Activated T-helper 1 cell treated with anti-CD3 and anti-CD28 coated beads, Interleukin-12 subunit alpha, Interleukin-12 subunit beta, Interleukin-2, Interleukin-4 antibody, amounts not matched to agents 30 ng/mL and 10 ng/mL and 1 ng/mL, durations not matched to agents 14 hours and 24 hours and 36 hours (primary cell): ENCODE measurements at regions of chr7 and their contacts with region 1.

Region 1: DNA sequence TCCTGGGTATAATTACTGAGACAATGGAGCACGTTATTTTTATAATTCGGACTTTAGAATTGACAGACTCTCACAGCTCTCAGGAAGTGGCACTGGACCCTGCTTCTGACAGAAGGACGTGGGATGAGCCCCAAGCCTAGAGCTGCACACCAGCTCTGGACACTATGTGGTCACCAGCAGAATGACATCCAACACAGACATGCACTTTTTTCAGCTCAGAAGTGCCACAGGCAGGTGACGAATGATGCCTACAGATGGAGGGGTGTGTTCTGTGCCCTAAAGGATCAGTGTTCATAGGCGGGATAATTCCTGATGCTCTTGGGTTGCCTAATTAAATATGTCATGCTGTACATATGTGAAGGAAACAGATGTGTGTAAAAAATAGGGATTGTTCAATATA is 87.9 kb downstream of the VIPR2 start:
- DNase-seq: no peak
- H3K4me3 Mint-ChIP-seq: no peak overlapping the region
- H3K27ac Mint-ChIP-seq: no peak overlapping the region
- H3K4me1 Mint-ChIP-seq: peaks cover 9% of the 10 kb centered on the region
- H3K27me3 Mint-ChIP-seq: no peaks in the 10 kb centered on the region

Region 2: DNA sequence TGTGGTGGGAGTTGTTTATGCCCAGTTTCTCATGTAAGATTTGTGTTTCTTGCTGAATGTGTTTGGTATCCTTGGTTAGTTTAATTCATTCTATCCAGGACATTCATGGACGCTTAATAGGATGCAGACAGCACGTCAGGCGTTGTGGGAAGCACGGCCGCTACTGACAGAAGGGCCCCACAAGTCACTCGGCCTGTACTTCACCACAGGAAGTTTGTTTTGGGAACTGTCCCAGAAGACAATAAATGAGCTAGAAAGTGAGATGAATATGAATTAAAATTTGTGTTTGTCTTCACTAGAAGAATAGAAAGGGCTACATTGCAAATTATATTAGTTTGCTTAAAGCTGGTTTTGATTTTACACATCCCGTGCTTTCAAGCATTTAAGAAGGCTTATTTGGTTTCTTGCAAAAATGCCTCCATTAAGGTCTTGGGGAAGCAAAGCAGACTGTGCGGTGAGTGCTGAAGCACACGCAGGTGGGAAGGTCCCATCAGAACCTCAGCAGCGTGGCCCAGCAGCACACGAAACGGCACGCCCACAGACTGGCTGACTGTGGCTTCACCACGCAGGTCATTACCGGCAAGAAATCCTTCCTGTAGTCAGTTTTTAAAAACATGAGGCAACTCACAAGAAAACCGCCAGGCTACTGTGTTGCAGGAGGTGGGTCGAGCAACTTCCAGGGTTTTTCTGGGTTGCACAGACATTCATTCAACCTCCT is 13.9 kb after region 1 on chr7:
- intact Hi-C with region 1: loop called (anchors 2 kb)
- DNase-seq: peak; percentile 21
- H3K4me3 Mint-ChIP-seq: no peak overlapping the region
- H3K27ac Mint-ChIP-seq: peak overlapping the region; percentile 57
- H3K4me1 Mint-ChIP-seq: peaks cover 32% of the 10 kb centered on the region
- H3K27me3 Mint-ChIP-seq: peaks cover 3% of the 10 kb centered on the region